ENCODE measurements at regions of chr17 and their contacts with region 1.

Region 1: GRCh38 chr17:62065598-62066468 is 755 bp upstream of the MED13 start:
- DNase-seq: peak; percentile 98 to 99
- ATAC-seq: peak; percentile 93 to 98
- H3K4me3 ChIP-seq: peak overlapping the region; percentile 94
- H3K27ac ChIP-seq: peak overlapping the region; percentile 97
- H3K4me1 ChIP-seq: peaks cover 38% of the 10 kb centered on the region
- CTCF ChIP-seq: peak; percentile 99
- EP300 ChIP-seq: no peak
- POLR2A ChIP-seq: peak; percentile 75
- RAD21 ChIP-seq: peak; percentile 78

Region 2: DNA sequence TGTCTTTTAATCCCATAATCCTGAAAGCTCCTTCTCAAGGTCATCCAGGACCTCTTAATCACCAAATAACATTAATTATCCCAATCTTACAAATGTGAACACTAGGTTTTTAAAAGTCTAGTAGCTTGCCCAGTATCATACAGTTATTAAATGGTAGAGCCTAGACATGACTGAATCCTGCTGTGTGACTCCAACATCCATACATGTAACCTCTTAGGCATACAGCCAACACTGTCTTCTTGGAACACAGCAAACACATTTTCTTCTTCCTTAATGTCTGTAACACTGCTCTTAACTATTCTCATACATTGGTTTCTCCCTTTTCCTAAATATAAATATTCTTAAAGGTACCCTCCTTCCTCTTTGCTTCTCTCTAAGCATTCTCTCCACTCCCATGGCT is 216.2 kb before region 1 on chr17:
- CTCF ChIA-PET with region 1: no interaction called
- POLR2A ChIA-PET with region 1: no interaction called
- DNase-seq: no peak
- ATAC-seq: no peak
- H3K4me3 ChIP-seq: no peak overlapping the region
- H3K27ac ChIP-seq: no peak overlapping the region
- H3K4me1 ChIP-seq: no peaks in the 10 kb centered on the region
- CTCF ChIP-seq: no peak
- EP300 ChIP-seq: no peak
- POLR2A ChIP-seq: no peak
- RAD21 ChIP-seq: no peak

Region 3: GRCh38 chr17:62052757-62053338 is 13.0 kb before region 1 on chr17:
- CTCF ChIA-PET with region 1: interaction called, 33 read pairs
- POLR2A ChIA-PET with region 1: interaction called, 6 read pairs
- DNase-seq: no peak
- ATAC-seq: no peak
- H3K4me3 ChIP-seq: no peak overlapping the region
- H3K27ac ChIP-seq: no peak overlapping the region
- H3K4me1 ChIP-seq: peaks cover 58% of the 10 kb centered on the region
- CTCF ChIP-seq: no peak
- EP300 ChIP-seq: no peak
- POLR2A ChIP-seq: no peak
- RAD21 ChIP-seq: no peak

Region 4: GRCh38 chr17:62085511-62086408 is 19.9 kb after region 1 on chr17:
- CTCF ChIA-PET with region 1: interaction called, 65 read pairs
- POLR2A ChIA-PET with region 1: no interaction called
- DNase-seq: no peak
- ATAC-seq: no peak
- H3K4me3 ChIP-seq: no peak overlapping the region
- H3K27ac ChIP-seq: no peak overlapping the region
- H3K4me1 ChIP-seq: no peaks in the 10 kb centered on the region
- CTCF ChIP-seq: no peak
- EP300 ChIP-seq: no peak
- POLR2A ChIP-seq: no peak
- RAD21 ChIP-seq: no peak

Region 5: GRCh38 chr17:62098623-62099231 is 32.9 kb after region 1 on chr17:
- CTCF ChIA-PET with region 1: interaction called, 14 read pairs
- POLR2A ChIA-PET with region 1: interaction called, 6 read pairs
- DNase-seq: no peak
- ATAC-seq: no peak
- H3K4me3 ChIP-seq: no peak overlapping the region
- H3K27ac ChIP-seq: no peak overlapping the region
- H3K4me1 ChIP-seq: peaks cover 10% of the 10 kb centered on the region
- CTCF ChIP-seq: no peak
- EP300 ChIP-seq: no peak
- POLR2A ChIP-seq: no peak
- RAD21 ChIP-seq: no peak

Measured in A549 (cell line).